Panc1 (cell line): ENCODE measurements at regions of chr11 and their contacts with region 1.

Region 1: GRCh38 chr11:78497293-78497692 is 77.4 kb downstream of the NARS2 start:
- DNase-seq: no peak
- ATAC-seq: no peak
- H3K4me3 ChIP-seq: no peak overlapping the region
- H3K27ac ChIP-seq: no peak overlapping the region
- H3K4me1 ChIP-seq: no peaks in the 10 kb centered on the region
- H3K27me3 ChIP-seq: no peaks in the 10 kb centered on the region
- CTCF ChIP-seq: no peak

Region 2: GRCh38 chr11:78295991-78296935 is 201.0 kb before region 1 on chr11:
- CTCF ChIA-PET with region 1: no interaction called
- POLR2A ChIA-PET with region 1: interaction called, 12 read pairs
- in situ Hi-C with region 1: no loop called
- intact Hi-C with region 1: no loop called
- DNase-seq: no peak
- ATAC-seq: no peak
- H3K4me3 ChIP-seq: no peak overlapping the region
- H3K27ac ChIP-seq: no peak overlapping the region
- H3K4me1 ChIP-seq: peaks cover 3% of the 10 kb centered on the region; the same call in 1 of the 2 replicates
- H3K27me3 ChIP-seq: no peaks in the 10 kb centered on the region
- CTCF ChIP-seq: no peak

Region 3: GRCh38 chr11:78365381-78365792 is 131.9 kb before region 1 on chr11:
- CTCF ChIA-PET with region 1: no interaction called
- POLR2A ChIA-PET with region 1: no interaction called
- in situ Hi-C with region 1: no loop called
- intact Hi-C with region 1: no loop called
- DNase-seq: no peak
- ATAC-seq: peak; percentile 66
- H3K4me3 ChIP-seq: no peak overlapping the region
- H3K27ac ChIP-seq: no peak overlapping the region
- H3K4me1 ChIP-seq: peaks cover 9% of the 10 kb centered on the region
- H3K27me3 ChIP-seq: no peaks in the 10 kb centered on the region
- CTCF ChIP-seq: 0 out of 2 replicates have a peak, but pooled peaks have one; percentile 11

Region 4: DNA sequence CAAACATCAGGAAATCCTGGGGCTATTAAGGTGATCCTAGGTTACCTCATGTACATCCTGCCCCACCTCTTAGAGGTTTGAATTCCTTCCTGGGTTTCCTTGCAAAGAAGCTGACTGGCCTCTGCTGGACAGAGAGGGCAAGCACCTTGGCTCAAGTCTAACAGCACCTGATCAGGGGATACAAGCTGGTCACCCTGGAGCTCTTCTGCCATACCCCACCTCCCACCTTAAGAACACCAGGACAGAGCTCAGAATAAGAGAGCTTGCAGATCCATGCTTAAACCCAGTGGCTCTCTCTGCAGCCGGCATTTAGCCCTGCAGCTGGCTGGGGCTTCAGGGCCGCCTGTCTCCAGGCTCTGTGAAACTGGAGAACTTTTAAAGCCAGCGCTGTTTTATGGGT is 464.0 kb after region 1 on chr11:
- CTCF ChIA-PET with region 1: no interaction called
- POLR2A ChIA-PET with region 1: no interaction called
- in situ Hi-C with region 1: no loop called
- intact Hi-C with region 1: no loop called
- DNase-seq: no peak
- ATAC-seq: peak; percentile 85
- H3K4me3 ChIP-seq: no peak overlapping the region; a peak in 1 of 4 replicates
- H3K27ac ChIP-seq: no peak overlapping the region
- H3K4me1 ChIP-seq: no peaks in the 10 kb centered on the region
- H3K27me3 ChIP-seq: no peaks in the 10 kb centered on the region
- CTCF ChIP-seq: peak; percentile 77